ENCODE measurements at regions of chr4 and their contacts with region 1.

Region 1: GRCh38 chr4:2220016-2220630 is 21.8 kb downstream of the HAUS3 start:
- DNase-seq: peak; percentile 63
- H3K4me3 ChIP-seq: no peak overlapping the region; a peak in 1 of 4 replicates
- H3K27ac ChIP-seq: no peak overlapping the region
- H3K4me1 ChIP-seq: no peaks in the 10 kb centered on the region; a peak in 1 of 4 replicates
- H3K27me3 ChIP-seq: no peaks in the 10 kb centered on the region
- CTCF ChIP-seq: peak; percentile 90
- EP300 ChIP-seq: no peak
- RAD21 ChIP-seq: peak; percentile 96

Region 2: GRCh38 chr4:1809754-1810511 is 410.2 kb before region 1 on chr4:
- CTCF ChIA-PET with region 1: no interaction called
- POLR2A ChIA-PET with region 1: no interaction called
- DNase-seq: peak; percentile 96
- H3K4me3 ChIP-seq: peak overlapping the region in 1 of 2 experiments; percentile 42; a peak in 1 of 4 replicates
- H3K27ac ChIP-seq: no peak overlapping the region
- H3K4me1 ChIP-seq: peaks cover 0 to 3% of the 10 kb centered on the region in 2 experiments; a peak in 1 of 4 replicates
- H3K27me3 ChIP-seq: no peaks in the 10 kb centered on the region
- CTCF ChIP-seq: peak; percentile 93
- EP300 ChIP-seq: no peak
- RAD21 ChIP-seq: peak; percentile 92

Region 3: DNA sequence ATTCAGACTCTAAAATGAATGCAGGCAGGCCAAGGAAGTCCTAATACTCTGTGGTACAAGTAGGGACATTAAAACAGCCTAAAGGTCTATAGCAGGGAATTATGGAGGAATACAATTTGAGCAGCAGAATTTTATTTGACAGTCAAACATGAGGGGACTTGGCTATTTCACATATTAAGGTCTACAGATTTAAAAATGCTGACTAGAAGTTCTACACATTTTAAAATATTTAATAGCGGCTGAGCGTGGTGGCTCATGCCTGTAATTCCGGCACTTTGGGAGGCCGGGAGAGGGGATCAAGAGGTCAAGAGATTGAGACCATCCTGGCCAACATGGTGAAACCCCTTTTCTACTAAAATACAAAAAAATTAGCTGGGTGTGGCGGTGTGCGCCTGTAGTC is 11.0 kb after region 1 on chr4:
- CTCF ChIA-PET with region 1: interaction called, 11 read pairs
- POLR2A ChIA-PET with region 1: no interaction called
- DNase-seq: no peak
- H3K4me3 ChIP-seq: no peak overlapping the region
- H3K27ac ChIP-seq: no peak overlapping the region
- H3K4me1 ChIP-seq: no peaks in the 10 kb centered on the region
- H3K27me3 ChIP-seq: no peaks in the 10 kb centered on the region
- CTCF ChIP-seq: no peak
- EP300 ChIP-seq: no peak
- RAD21 ChIP-seq: no peak

Region 4: DNA sequence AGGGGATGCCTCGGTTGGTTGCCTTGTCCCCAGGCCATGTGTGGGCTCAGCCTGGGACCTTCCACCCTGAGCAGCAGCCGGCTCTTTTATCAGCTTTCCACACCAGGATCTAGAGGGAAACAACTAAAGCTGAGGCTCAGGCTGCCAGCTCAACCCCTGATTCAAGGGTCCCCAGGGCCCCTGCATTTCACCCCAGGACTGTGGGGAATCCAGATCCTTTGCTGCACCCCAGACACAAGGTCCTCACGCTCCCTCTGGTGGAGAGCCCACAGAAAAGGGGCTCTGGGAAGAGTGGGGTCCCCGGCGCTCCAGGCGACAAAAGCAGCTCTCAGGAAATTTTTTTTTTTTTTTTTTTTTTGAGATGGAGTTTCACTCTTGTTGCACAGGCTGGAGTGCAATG is 134.0 kb after region 1 on chr4:
- CTCF ChIA-PET with region 1: interaction called, 16 read pairs
- POLR2A ChIA-PET with region 1: no interaction called
- DNase-seq: peak; percentile 77
- H3K4me3 ChIP-seq: no peak overlapping the region
- H3K27ac ChIP-seq: no peak overlapping the region
- H3K4me1 ChIP-seq: peaks cover 0 to 13% of the 10 kb centered on the region in 2 experiments; a peak in 1 of 4 replicates
- H3K27me3 ChIP-seq: no peaks in the 10 kb centered on the region
- CTCF ChIP-seq: peak; percentile 45
- EP300 ChIP-seq: no peak
- RAD21 ChIP-seq: peak; percentile 59

Region 5: DNA sequence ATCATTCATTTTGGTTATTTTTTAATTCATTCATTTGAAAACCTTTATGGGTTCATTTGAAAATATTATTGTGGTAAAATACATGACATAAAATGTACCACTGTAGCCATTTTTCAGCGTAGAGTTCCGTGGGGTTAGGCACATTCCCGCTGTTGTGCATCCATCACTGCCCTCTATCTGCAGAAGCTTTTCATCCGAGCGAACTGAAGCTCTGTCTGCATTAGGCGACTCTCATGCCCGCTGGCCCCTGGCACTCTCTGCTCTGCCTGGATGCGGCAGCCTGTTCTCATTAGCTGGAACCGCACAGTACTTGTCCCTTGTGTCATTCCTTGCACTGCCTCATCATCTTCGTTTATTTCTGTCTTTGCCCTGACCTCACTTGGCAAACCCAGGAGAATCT is 216.2 kb after region 1 on chr4:
- CTCF ChIA-PET with region 1: interaction called, 19 read pairs
- POLR2A ChIA-PET with region 1: no interaction called
- DNase-seq: peak; percentile 86
- H3K4me3 ChIP-seq: no peak overlapping the region
- H3K27ac ChIP-seq: no peak overlapping the region
- H3K4me1 ChIP-seq: peaks cover 6 to 11% of the 10 kb centered on the region in 2 experiments; a peak in 1 of 4 replicates
- H3K27me3 ChIP-seq: no peaks in the 10 kb centered on the region
- CTCF ChIP-seq: peak; percentile 51
- EP300 ChIP-seq: no peak
- RAD21 ChIP-seq: peak; percentile 76

Region 6: GRCh38 chr4:2462218-2462991 is 242.3 kb after region 1 on chr4:
- CTCF ChIA-PET with region 1: interaction called, 27 read pairs
- POLR2A ChIA-PET with region 1: no interaction called
- DNase-seq: peak; percentile 96
- H3K4me3 ChIP-seq: peak overlapping the region; percentile 50 to 64
- H3K27ac ChIP-seq: no peak overlapping the region
- H3K4me1 ChIP-seq: peaks cover 0 to 14% of the 10 kb centered on the region in 2 experiments; a peak in 1 of 4 replicates
- H3K27me3 ChIP-seq: no peaks in the 10 kb centered on the region
- CTCF ChIP-seq: peak; percentile 56
- EP300 ChIP-seq: no peak
- RAD21 ChIP-seq: peak; percentile 56

Region 7: GRCh38 chr4:2503809-2504208 is 283.7 kb after region 1 on chr4:
- CTCF ChIA-PET with region 1: interaction called, 10 read pairs
- POLR2A ChIA-PET with region 1: no interaction called
- DNase-seq: no peak
- H3K4me3 ChIP-seq: no peak overlapping the region
- H3K27ac ChIP-seq: no peak overlapping the region
- H3K4me1 ChIP-seq: peaks cover 0 to 9% of the 10 kb centered on the region in 2 experiments; a peak in 1 of 4 replicates
- H3K27me3 ChIP-seq: no peaks in the 10 kb centered on the region
- CTCF ChIP-seq: no peak
- EP300 ChIP-seq: no peak
- RAD21 ChIP-seq: no peak

Measured in SK-N-SH (cell line).